Caco-2 (cell line): ENCODE measurements at regions of chr2 and their contacts with region 1.

Region 1: GRCh38 chr2:197705121-197705911 is at the start of gene MARS2:
- DNase-seq: peak; percentile 92 to 94
- H3K4me3 ChIP-seq: peak within 1 kb of the TSS; percentile 86
- H3K4me3 Mint-ChIP-seq: peak within 1 kb of the TSS; percentile 90
- H3K27ac Mint-ChIP-seq: peak within 1 kb of the TSS; percentile 94
- H3K4me1 ChIP-seq: peaks cover 5% of the 10 kb centered on the region
- H3K4me1 Mint-ChIP-seq: peaks cover 12% of the 10 kb centered on the region
- H3K27me3 ChIP-seq: no peaks in the 10 kb centered on the region
- H3K27me3 Mint-ChIP-seq: peaks cover 3% of the 10 kb centered on the region
- CTCF ChIP-seq: no peak
- total RNA-seq, gene MARS2: 12.1 and 13.1 TPM in 2 replicates

Region 2: DNA sequence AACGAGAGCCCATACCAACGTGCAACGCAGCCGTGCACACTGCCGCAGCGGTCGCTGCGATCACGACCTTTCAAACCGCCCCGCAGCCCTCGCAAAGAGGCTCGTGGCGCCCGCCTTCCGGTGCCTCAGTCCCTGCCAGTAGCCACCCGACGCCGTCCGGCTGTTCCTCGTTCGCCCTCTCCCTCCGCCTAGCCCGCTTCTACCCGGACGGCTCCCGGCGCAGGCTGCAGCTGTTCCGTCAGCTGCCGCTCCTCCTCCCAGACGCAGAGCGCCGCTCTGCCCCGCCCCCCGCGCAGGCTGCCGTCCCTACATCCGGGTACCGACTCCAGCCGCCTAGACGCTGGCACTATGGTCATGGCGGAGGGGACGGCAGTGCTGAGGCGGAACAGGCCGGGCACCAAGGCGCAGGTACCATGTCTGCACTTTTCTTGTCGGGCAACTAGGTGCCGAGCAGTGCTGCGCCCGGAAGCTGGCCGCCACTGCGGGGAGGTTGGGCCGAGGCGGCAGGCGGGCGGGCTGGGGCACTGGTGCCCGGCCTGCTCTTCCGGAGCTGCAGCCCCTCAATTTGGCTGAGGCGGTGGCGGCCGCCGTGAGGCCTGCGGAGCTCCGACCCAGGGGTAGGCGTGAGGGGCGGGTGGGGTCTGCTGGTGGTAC is 189.4 kb before region 1 on chr2 and contains the start of gene MOB4:
- CTCF ChIA-PET with region 1: no interaction called
- POLR2A ChIA-PET with region 1: no interaction called
- intact Hi-C with region 1: loop called (anchors 5 kb)
- DNase-seq: peak; percentile 96 to 98
- H3K4me3 ChIP-seq: peak within 1 kb of the TSS; percentile 99
- H3K4me3 Mint-ChIP-seq: peak within 1 kb of the TSS; percentile 95
- H3K27ac Mint-ChIP-seq: peak within 1 kb of the TSS; percentile 91
- H3K4me1 ChIP-seq: peaks cover 15% of the 10 kb centered on the region
- H3K4me1 Mint-ChIP-seq: peaks cover 9% of the 10 kb centered on the region
- H3K27me3 ChIP-seq: no peaks in the 10 kb centered on the region
- H3K27me3 Mint-ChIP-seq: no peaks in the 10 kb centered on the region
- CTCF ChIP-seq: no peak
- total RNA-seq, gene MOB4: 27.2 and 31.1 TPM in 2 replicates